Activated naive CD4-positive, alpha-beta T cell treated with anti-CD3 and anti-CD28 coated beads for 36 hours (primary cell): ENCODE measurements at regions of chr5 and their contacts with region 1.

Region 1: DNA sequence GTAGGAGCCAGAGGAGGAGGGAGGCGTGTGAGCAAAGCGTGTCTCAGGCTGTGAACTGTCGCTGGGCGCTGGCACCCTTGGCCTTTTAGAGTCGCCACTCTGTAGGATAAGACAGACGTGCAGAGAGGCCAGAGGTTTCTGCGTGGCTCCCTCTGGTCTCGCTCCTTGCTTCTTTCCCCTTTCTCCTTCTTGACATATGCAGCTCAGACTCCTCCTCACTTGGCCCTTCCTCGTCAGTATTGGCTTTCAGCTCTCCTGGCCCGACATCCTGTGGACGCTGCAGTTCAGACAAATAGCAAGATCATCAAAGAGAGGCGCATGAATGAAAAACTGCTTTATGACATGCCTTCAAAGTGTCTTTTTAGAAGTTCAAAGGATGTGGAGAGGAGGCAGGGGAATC is 116.8 kb upstream of the SPRY4 start:
- DNase-seq: peak; percentile 74
- H3K4me3 Mint-ChIP-seq: no peak overlapping the region
- H3K27ac Mint-ChIP-seq: no peak overlapping the region
- H3K4me1 Mint-ChIP-seq: peaks cover 16% of the 10 kb centered on the region
- H3K27me3 Mint-ChIP-seq: peaks cover 2% of the 10 kb centered on the region

Region 2: DNA sequence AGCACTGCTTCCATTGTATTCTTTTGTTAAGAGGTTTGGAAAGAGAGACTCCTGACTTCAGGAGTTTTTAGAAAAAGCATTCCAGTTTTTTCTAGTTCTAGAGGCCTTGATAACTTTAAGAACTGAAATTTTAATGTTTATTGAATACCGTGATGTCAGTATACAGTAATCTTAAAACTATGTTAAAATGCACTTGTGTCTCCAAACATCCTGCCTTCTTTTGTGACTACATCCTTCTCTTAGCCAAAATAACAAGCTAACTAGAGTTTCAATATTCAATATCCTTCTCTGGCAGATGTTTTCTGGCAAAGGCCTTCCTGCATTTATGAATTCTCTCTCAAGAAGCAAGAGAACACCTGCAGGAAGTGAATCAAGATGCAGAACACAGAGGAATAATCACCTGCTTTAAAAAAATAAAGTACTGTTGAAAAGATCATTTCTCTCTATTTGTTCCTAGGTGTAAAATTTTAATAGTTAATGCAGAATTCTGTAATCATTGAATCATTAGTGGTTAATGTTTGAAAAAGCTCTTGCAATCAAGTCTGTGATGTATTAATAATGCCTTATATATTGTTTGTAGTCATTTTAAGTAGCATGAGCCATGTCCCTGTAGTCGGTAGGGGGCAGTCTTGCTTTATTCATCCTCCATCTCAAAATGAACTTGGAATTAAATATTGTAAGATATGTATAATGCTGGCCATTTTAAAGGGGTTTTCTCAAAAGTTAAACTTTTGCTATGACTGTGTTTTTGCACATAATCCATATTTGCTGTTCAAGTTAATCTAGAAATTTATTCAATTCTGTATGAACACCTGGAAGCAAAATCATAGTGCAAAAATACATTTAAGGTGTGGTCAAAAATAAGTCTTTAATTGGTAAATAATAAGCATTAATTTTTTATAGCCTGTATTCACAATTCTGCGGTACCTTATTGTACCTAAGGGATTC is 289.9 kb before region 1 on chr5:
- CTCF ChIA-PET with region 1: no interaction called
- intact Hi-C with region 1: loop called (anchors 1 kb)
- DNase-seq: peak; percentile 76
- H3K4me3 Mint-ChIP-seq: no peak overlapping the region
- H3K27ac Mint-ChIP-seq: no peak overlapping the region
- H3K4me1 Mint-ChIP-seq: peaks cover 15% of the 10 kb centered on the region
- H3K27me3 Mint-ChIP-seq: no peaks in the 10 kb centered on the region